Calu3 (cell line): ENCODE measurements at regions of chr18 and their contacts with region 1.

Region 1: GRCh38 chr18:77132371-77133050 is at the start of gene MBP:
- DNase-seq: peak; percentile 99
- H3K4me3 Mint-ChIP-seq: peak within 1 kb of the TSS; percentile 93
- H3K27ac Mint-ChIP-seq: peak within 1 kb of the TSS; percentile 72
- H3K4me1 Mint-ChIP-seq: peaks cover 32% of the 10 kb centered on the region
- H3K27me3 Mint-ChIP-seq: no peaks in the 10 kb centered on the region
- CTCF ChIP-seq: no peak
- total RNA-seq, gene MBP: 221 and 257 TPM in 2 replicates

Region 2: GRCh38 chr18:76953583-76954233 is 178.8 kb before region 1 on chr18:
- CTCF ChIA-PET with region 1: no interaction called
- intact Hi-C with region 1: loop called (anchors 5 kb)
- DNase-seq: peak; percentile 71
- H3K4me3 Mint-ChIP-seq: peak overlapping the region; percentile 12
- H3K27ac Mint-ChIP-seq: no peak overlapping the region
- H3K4me1 Mint-ChIP-seq: peaks cover 21% of the 10 kb centered on the region
- H3K27me3 Mint-ChIP-seq: peaks cover 41% of the 10 kb centered on the region
- CTCF ChIP-seq: no peak

Region 3: GRCh38 chr18:77067291-77068061 is 65.0 kb before region 1 on chr18:
- CTCF ChIA-PET with region 1: interaction called, 36 read pairs
- intact Hi-C with region 1: loop called (anchors 1 kb)
- DNase-seq: peak; percentile 91
- H3K4me3 Mint-ChIP-seq: peak overlapping the region; percentile 50
- H3K27ac Mint-ChIP-seq: peak overlapping the region; percentile 96
- H3K4me1 Mint-ChIP-seq: peaks cover 91% of the 10 kb centered on the region
- H3K27me3 Mint-ChIP-seq: no peaks in the 10 kb centered on the region
- CTCF ChIP-seq: peak; percentile 16

Region 4: DNA sequence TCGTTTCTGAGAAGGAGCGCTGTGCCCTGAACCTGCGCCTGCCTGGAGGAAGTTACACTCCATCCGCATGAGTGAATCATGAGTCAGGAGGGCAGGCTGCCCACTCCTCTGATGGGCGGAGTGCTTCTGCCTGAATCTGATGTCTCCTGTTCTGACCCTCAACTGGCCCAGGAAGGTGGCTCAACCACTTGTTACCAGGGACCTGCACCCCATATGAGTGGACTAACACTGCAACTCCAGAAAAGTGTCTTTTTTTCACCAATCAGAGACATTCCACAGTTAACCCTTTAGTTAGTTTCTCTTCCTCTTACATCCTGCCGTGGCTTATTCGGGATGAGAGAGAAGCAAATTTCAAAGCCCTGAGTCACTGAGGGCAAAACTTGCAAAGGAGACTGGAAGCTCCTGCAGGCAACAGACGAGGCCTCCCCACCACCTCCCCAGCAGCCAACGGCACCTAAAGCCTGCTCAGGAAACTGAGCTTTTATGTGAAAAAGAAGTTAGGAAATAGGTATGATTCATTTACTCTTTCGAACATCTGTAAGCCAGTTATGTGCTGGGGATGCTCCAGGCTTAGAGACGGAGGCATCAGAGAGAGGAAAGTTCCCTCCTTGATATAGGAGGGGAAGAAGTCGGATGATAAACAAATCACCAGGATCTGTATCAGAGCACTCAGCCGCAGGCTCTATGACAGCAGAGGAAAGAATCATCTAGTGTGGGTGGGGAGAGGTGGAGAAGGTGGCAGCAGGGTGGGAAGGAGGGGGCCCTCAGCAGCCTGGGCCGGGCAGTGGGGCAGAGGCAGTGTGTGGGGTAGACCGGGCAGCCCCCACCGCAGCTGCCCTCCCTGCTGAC is 30.9 kb before region 1 on chr18:
- CTCF ChIA-PET with region 1: interaction called, 11 read pairs
- intact Hi-C with region 1: loop called (anchors 1 kb)
- DNase-seq: peak; percentile 94
- H3K4me3 Mint-ChIP-seq: peak overlapping the region; percentile 57
- H3K27ac Mint-ChIP-seq: peak overlapping the region; percentile 94
- H3K4me1 Mint-ChIP-seq: peaks cover 81% of the 10 kb centered on the region
- H3K27me3 Mint-ChIP-seq: no peaks in the 10 kb centered on the region
- CTCF ChIP-seq: no peak

Region 5: DNA sequence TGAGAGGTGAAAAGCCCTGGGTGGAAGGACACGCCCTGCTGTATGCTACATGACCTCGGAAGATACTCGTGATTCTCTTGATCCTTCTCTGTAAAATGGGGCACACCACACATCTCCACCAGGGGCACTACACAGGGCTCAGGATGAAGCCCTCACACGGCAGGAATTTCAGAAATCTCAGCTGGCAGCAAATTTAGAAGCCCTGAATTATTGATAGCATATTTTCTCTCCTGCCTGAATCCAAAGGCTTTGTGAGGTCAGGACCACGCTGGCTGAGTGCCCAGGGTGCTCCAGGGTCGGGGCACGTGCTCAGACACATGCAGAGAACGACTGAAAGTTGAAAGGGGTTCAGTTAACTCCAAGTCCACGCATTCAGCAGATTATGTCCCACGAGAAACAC is 75.0 kb after region 1 on chr18:
- CTCF ChIA-PET with region 1: interaction called, 12 read pairs
- intact Hi-C with region 1: loop called (anchors 2 kb)
- DNase-seq: peak; percentile 87
- H3K4me3 Mint-ChIP-seq: no peak overlapping the region
- H3K27ac Mint-ChIP-seq: no peak overlapping the region
- H3K4me1 Mint-ChIP-seq: peaks cover 20% of the 10 kb centered on the region
- H3K27me3 Mint-ChIP-seq: peaks cover 27% of the 10 kb centered on the region
- CTCF ChIP-seq: peak; percentile 98